ENCODE measurements at regions of chr20 and their contacts with region 1.

Region 1: DNA sequence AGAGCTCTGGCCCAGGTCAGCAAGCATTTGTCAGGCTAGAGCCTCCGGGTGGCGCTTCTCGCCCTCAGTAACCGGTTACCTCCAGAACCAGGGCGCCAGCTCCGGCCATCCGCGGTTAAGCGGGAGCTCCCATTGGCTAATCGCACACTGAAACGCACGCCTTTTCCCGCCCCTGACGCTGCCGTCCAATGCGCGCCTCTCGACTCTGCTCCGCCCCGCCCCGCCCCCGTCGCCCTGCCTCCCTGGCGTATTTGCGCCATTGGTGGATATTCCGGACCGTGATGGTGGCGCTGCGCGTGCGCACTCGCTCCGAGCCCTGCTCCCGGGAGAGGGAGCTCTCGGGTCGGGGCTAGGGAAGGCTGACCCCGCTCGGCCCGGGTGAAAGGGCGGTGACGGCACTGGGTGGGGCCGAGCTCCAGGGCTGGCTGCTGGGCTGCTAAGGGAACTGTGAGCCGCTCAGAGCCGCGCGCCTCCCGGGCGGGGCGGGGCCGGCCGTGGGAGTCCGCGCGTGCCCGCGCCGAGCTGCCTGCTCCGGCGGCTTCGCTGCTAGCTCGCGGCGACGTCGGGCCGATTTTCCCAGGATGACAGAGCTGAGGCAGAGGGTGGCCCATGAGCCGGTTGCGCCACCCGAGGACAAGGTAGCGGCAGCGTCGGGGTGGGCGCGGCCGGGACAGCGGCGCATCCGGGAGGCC is at the start of gene CDS2:
- H3K4me3 ChIP-seq: peak within 1 kb of the TSS; percentile 93
- H3K27ac ChIP-seq: peak within 1 kb of the TSS; percentile 96
- H3K4me1 ChIP-seq: peaks cover 7% of the 10 kb centered on the region
- CTCF ChIP-seq: peak; percentile 91

Region 2: DNA sequence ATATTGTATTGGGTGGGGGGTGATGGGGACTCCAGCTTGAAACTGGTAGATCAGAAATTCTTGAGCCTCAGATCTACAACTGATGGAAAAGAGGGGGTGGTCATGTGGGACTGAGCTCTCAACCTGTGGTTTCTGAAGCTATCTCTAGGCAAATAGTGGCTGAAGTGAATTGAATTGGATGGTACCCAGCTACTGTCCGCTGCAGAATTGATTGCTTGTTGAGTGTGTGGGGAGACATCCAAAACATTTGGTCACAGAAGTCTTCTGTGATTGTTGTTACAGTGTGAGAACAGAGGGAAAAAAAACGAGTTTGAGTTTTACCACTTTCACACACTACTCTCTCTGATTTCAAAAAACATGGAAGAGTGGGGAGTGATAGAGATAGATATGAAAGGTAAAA is 15.0 kb after region 1 on chr20:
- CTCF ChIA-PET with region 1: interaction called, 15 read pairs
- POLR2A ChIA-PET with region 1: interaction called, 7 read pairs
- H3K4me3 ChIP-seq: no peak overlapping the region
- H3K27ac ChIP-seq: no peak overlapping the region
- H3K4me1 ChIP-seq: peaks cover 6% of the 10 kb centered on the region; the same call in 1 of the 2 replicates
- CTCF ChIP-seq: no peak

Region 3: GRCh38 chr20:5181956-5182355 is 55.3 kb after region 1 on chr20:
- CTCF ChIA-PET with region 1: interaction called, 160 read pairs
- POLR2A ChIA-PET with region 1: interaction called, 4 read pairs
- H3K4me3 ChIP-seq: no peak overlapping the region
- H3K27ac ChIP-seq: no peak overlapping the region
- H3K4me1 ChIP-seq: no peaks in the 10 kb centered on the region
- CTCF ChIP-seq: no peak

Region 4: DNA sequence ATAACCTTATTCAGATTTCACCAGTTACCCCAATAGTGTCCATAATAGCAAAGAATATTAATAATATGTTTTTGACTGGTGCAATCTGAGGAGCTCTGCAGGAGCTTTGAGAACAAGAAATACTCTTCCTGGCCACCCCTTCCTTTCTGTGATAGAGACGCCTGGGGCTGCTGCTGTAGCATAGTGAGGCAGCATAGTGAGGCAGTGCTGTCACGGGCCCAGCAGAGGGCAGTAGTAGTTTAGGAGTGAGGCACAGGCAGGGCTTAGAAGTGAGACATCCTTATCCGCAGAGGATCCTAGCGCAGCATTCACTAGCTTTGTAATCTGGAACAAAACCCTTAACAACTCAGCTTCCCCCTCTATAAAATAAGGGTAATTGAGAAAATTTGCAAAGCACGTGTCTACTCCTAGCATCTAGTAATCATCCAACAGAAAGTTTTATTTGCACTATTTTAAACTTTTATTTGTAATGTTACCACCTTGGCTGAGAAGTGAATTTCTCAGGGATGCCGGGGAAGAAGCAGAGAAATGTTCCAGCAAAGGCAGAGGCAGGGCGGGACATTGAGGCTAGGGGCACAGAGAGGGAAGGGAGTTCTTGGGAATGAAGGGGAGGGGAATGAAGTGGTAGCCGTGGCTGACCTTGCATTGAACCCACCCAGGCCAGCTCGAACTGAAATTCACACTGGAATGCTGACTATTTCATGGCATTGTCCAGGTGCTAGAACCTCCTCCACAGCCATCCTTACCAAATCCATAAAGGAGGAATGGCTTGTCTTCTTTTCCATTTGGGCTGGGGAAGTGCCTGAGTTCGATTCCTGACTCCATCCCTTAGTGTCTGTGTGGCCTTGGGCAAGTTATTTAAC is 78.9 kb after region 1 on chr20:
- CTCF ChIA-PET with region 1: interaction called, 14 read pairs
- POLR2A ChIA-PET with region 1: interaction called, 3 read pairs
- H3K4me3 ChIP-seq: no peak overlapping the region
- H3K27ac ChIP-seq: no peak overlapping the region
- H3K4me1 ChIP-seq: no peaks in the 10 kb centered on the region
- CTCF ChIP-seq: peak; percentile 80

Region 5: GRCh38 chr20:5448449-5449118 is 321.9 kb after region 1 on chr20:
- CTCF ChIA-PET with region 1: interaction called, 11 read pairs
- POLR2A ChIA-PET with region 1: no interaction called
- H3K4me3 ChIP-seq: no peak overlapping the region
- H3K27ac ChIP-seq: no peak overlapping the region
- H3K4me1 ChIP-seq: no peaks in the 10 kb centered on the region
- CTCF ChIP-seq: peak; percentile 22; the same call in 1 of the 2 replicates

Measured in HEK293 (cell line).